Activated B cell treated with CpG ODN at 0.5 μM for 24 hours (primary cell): ENCODE measurements at regions of chr13 and their contacts with region 1.

Region 1: GRCh38 chr13:77429320-77430142 is 102.6 kb upstream of the MYCBP2 start:
- DNase-seq: peak; percentile 22
- ATAC-seq: peak; percentile 91
- H3K4me3 Mint-ChIP-seq: peak overlapping the region; percentile 75
- H3K27ac Mint-ChIP-seq: peak overlapping the region; percentile 99
- H3K4me1 Mint-ChIP-seq: peaks cover 44% of the 10 kb centered on the region
- H3K27me3 Mint-ChIP-seq: no peaks in the 10 kb centered on the region
- CTCF ChIP-seq: no peak

Region 2: DNA sequence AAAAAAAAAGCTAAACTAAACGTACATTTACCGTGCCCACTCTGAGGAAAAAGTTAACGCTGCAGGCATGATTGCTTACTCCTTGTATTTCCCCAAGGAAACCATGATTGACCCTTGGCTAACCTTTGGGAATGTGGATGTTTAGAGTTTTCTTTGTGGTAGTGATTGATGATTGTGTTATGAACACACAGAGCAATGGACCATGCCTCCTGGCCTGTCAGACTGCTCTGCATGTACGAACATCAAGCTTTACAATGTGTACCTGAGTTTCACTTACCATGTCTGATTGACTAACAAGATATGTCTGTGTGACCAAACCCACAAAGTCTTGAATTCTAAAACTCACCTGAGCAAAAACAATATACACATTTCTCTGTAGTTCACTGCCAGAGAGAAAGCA is 137.8 kb before region 1 on chr13:
- CTCF ChIA-PET with region 1: no interaction called
- POLR2A ChIA-PET with region 1: no interaction called
- intact Hi-C with region 1: loop called (anchors 2 kb)
- DNase-seq: no peak
- ATAC-seq: no peak
- H3K4me3 Mint-ChIP-seq: no peak overlapping the region
- H3K27ac Mint-ChIP-seq: peak overlapping the region; percentile 76
- H3K4me1 Mint-ChIP-seq: peaks cover 47% of the 10 kb centered on the region
- H3K27me3 Mint-ChIP-seq: no peaks in the 10 kb centered on the region
- CTCF ChIP-seq: no peak

Region 3: GRCh38 chr13:77338961-77339401 is 90.5 kb before region 1 on chr13:
- CTCF ChIA-PET with region 1: no interaction called
- POLR2A ChIA-PET with region 1: interaction called, 18 read pairs
- intact Hi-C with region 1: loop called (anchors 1 kb)
- DNase-seq: peak; percentile 42
- ATAC-seq: peak; percentile 69
- H3K4me3 Mint-ChIP-seq: peak overlapping the region; percentile 79
- H3K27ac Mint-ChIP-seq: peak overlapping the region; percentile 95
- H3K4me1 Mint-ChIP-seq: peaks cover 80% of the 10 kb centered on the region
- H3K27me3 Mint-ChIP-seq: no peaks in the 10 kb centered on the region
- CTCF ChIP-seq: no peak

Region 4: GRCh38 chr13:77353995-77354394 is 75.5 kb before region 1 on chr13:
- CTCF ChIA-PET with region 1: no interaction called
- POLR2A ChIA-PET with region 1: interaction called, 3 read pairs
- intact Hi-C with region 1: loop called (anchors 2 kb)
- DNase-seq: no peak
- ATAC-seq: peak; percentile 86
- H3K4me3 Mint-ChIP-seq: peak overlapping the region; percentile 36
- H3K27ac Mint-ChIP-seq: peak overlapping the region; percentile 88
- H3K4me1 Mint-ChIP-seq: peaks cover 36% of the 10 kb centered on the region
- H3K27me3 Mint-ChIP-seq: no peaks in the 10 kb centered on the region
- CTCF ChIP-seq: no peak

Region 5: DNA sequence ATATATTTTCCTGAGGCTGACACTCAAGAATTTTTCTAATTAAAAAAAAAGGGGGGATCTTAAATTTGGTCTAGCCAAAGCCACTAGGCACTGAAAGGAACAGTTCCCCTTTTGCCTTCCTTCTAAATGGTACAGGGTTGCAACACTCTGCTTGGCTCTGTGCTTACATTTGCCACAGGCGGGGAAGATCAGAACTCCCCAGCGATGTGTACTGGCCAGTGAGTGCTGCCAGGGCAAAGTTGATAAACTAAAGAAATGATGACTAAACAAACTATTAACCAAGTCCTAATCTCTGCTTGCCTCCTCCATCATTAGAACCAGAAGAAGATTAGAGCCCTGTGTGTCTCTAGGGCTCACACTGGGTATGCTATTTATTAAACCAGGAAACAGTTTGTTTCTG is 30.7 kb after region 1 on chr13:
- CTCF ChIA-PET with region 1: no interaction called
- POLR2A ChIA-PET with region 1: interaction called, 7 read pairs
- intact Hi-C with region 1: loop called (anchors 1 kb)
- DNase-seq: no peak
- ATAC-seq: peak; percentile 91
- H3K4me3 Mint-ChIP-seq: no peak overlapping the region
- H3K27ac Mint-ChIP-seq: no peak overlapping the region
- H3K4me1 Mint-ChIP-seq: peaks cover 30% of the 10 kb centered on the region
- H3K27me3 Mint-ChIP-seq: no peaks in the 10 kb centered on the region
- CTCF ChIP-seq: no peak